ENCODE measurements at regions of chr10 and their contacts with region 1.

Region 1: DNA sequence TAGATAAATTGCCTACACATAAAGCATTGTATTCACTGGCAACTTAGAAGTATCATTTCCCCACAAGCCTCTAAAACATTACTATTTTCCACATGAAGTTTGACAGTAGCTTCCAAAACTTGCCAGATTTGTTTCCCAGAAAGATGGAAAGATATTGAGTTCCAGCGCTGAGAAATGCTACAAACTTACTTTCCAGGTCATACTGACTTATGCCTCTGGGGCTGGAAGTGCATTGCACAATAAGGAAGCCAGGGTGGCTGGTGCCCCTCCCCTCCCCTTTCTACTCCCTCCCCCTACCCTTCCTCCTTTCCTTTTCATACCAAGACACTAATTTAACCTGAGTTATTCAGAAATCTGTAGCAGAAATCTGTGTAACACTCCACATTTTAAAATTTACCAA is 212.6 kb downstream of the WDR37 start:
- DNase-seq: no peak
- H3K4me3 Mint-ChIP-seq: no peak overlapping the region
- H3K27ac Mint-ChIP-seq: no peak overlapping the region
- H3K4me1 Mint-ChIP-seq: no peaks in the 10 kb centered on the region
- H3K27me3 Mint-ChIP-seq: peaks cover 68% of the 10 kb centered on the region
- CTCF ChIP-seq: no peak

Region 2: GRCh38 chr10:1003884-1004675 is 264.8 kb before region 1 on chr10:
- CTCF ChIA-PET with region 1: no interaction called
- intact Hi-C with region 1: no loop called
- DNase-seq: no peak
- H3K4me3 Mint-ChIP-seq: no peak overlapping the region
- H3K27ac Mint-ChIP-seq: no peak overlapping the region
- H3K4me1 Mint-ChIP-seq: peaks cover 12% of the 10 kb centered on the region
- H3K27me3 Mint-ChIP-seq: no peaks in the 10 kb centered on the region
- CTCF ChIP-seq: no peak

Region 3: GRCh38 chr10:1240341-1240775 is 28.5 kb before region 1 on chr10:
- CTCF ChIA-PET with region 1: no interaction called
- intact Hi-C with region 1: no loop called
- DNase-seq: no peak
- H3K4me3 Mint-ChIP-seq: no peak overlapping the region
- H3K27ac Mint-ChIP-seq: no peak overlapping the region
- H3K4me1 Mint-ChIP-seq: no peaks in the 10 kb centered on the region
- H3K27me3 Mint-ChIP-seq: peaks cover 38% of the 10 kb centered on the region
- CTCF ChIP-seq: no peak

Region 4: GRCh38 chr10:1335642-1336041 is 66.8 kb after region 1 on chr10:
- CTCF ChIA-PET with region 1: no interaction called
- intact Hi-C with region 1: loop called (anchors 10 kb)
- DNase-seq: no peak
- H3K4me3 Mint-ChIP-seq: no peak overlapping the region
- H3K27ac Mint-ChIP-seq: no peak overlapping the region
- H3K4me1 Mint-ChIP-seq: no peaks in the 10 kb centered on the region
- H3K27me3 Mint-ChIP-seq: peaks cover 64% of the 10 kb centered on the region
- CTCF ChIP-seq: no peak

Measured in Calu3 (cell line).